ENCODE measurements at regions of chr22 and their contacts with region 1.

Region 1: GRCh38 chr22:36470162-36470993 is 11.1 kb downstream of the TXN2 start:
- DNase-seq: peak; percentile 90
- ATAC-seq: peak; percentile 96
- H3K4me3 Mint-ChIP-seq: no peak overlapping the region
- H3K27ac Mint-ChIP-seq: peak overlapping the region; percentile 77
- H3K4me1 Mint-ChIP-seq: peaks cover 41% of the 10 kb centered on the region
- H3K27me3 Mint-ChIP-seq: no peaks in the 10 kb centered on the region

Region 2: GRCh38 chr22:36311386-36312358 is 158.7 kb before region 1 on chr22:
- CTCF ChIA-PET with region 1: interaction called, 11 read pairs
- POLR2A ChIA-PET with region 1: no interaction called
- DNase-seq: no peak
- ATAC-seq: no peak
- H3K4me3 Mint-ChIP-seq: no peak overlapping the region
- H3K27ac Mint-ChIP-seq: peak overlapping the region; percentile 43
- H3K4me1 Mint-ChIP-seq: peaks cover 5% of the 10 kb centered on the region
- H3K27me3 Mint-ChIP-seq: no peaks in the 10 kb centered on the region

Region 3: DNA sequence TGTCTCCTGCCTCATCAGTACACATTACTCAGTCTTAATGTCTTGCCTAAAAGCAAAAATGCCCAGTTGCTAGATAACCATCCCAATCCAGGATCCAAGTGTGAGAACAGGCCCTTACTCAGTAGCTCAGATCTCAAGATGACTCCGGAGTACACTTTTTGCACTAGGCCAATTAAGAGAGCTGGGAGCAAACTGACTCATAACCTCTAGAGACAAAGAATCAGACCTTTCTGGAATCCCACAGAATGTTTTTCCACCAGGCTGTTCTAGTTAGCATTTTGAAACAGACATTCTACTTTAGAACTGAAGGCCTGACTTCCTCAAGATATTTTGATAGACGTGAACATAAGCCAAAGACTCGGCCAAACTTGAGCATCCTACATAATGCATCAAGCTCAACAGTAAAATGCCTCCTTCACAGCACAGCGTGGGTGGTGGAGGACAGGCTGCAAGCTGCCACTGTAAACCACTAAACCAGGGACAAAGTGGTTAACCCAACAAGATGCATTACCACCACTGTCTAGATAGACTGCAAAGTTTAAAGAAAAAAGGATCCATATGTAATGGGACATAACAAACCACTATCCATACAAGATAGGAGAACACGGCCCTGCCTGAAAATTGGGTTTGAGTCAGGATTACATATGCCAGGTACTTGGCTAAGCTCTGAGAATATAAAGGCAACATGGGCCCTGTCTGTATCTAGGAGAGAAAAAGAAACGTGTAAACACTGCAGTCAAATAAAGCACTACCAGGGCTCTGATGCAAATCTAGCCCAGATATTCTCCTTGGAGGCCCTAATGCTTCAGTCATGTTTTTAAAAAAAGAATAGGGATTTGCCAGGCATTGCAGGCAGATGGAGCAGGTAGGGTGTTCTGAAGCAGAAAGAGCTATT is 131.0 kb before region 1 on chr22:
- CTCF ChIA-PET with region 1: interaction called, 25 read pairs
- POLR2A ChIA-PET with region 1: no interaction called
- DNase-seq: peak; percentile 55
- ATAC-seq: peak; percentile 31
- H3K4me3 Mint-ChIP-seq: peak overlapping the region; percentile 1
- H3K27ac Mint-ChIP-seq: peak overlapping the region; percentile 83
- H3K4me1 Mint-ChIP-seq: peaks cover 98% of the 10 kb centered on the region
- H3K27me3 Mint-ChIP-seq: no peaks in the 10 kb centered on the region

Region 4: GRCh38 chr22:36359181-36359996 is 111.0 kb before region 1 on chr22:
- CTCF ChIA-PET with region 1: interaction called, 12 read pairs
- POLR2A ChIA-PET with region 1: interaction called, 3 read pairs
- DNase-seq: no peak
- ATAC-seq: no peak
- H3K4me3 Mint-ChIP-seq: peak overlapping the region; percentile 13
- H3K27ac Mint-ChIP-seq: peak overlapping the region; percentile 74
- H3K4me1 Mint-ChIP-seq: peaks cover 94% of the 10 kb centered on the region
- H3K27me3 Mint-ChIP-seq: no peaks in the 10 kb centered on the region

Region 5: DNA sequence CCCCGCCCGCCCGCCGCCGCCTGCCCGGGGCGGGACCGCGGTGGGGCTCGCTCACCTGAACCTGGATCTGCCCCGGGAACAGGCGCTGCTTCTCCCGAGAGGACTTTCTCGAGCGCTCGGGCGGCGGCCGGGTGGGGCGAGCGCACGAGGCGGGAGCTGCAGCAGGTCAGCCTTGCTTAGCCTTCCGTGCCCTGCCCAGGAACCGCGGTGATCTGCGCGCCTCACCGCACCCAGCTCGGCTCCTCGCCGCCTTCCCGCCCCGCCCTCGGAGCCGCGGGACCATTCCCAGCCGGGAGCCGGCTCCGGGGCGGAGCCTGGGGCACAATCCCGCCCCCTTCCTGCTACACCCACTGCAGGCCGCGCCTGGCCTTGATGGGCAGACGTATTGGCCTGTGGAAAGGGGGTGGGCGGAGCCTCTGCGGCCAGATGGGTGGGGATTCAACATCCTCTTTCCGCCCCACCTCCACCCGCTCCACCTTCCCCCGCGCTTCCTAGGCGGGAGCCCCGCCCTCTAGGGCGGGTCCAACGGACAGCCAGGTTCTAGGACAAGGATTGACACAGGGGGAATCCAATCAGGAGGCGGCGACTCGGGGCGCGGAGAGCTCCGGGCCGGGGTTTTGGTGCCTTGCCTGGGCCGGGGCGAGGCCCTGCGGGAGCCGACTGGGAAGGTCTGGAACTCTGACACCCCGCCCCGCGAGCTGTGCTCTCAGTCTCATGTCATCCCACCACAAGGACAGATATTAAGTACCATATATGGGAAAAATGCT is 82.4 kb before region 1 on chr22 and contains the start of gene MYH9:
- CTCF ChIA-PET with region 1: interaction called, 17 read pairs
- POLR2A ChIA-PET with region 1: interaction called, 3 read pairs
- DNase-seq: peak; percentile 100
- ATAC-seq: peak; percentile 85
- H3K4me3 Mint-ChIP-seq: peak within 1 kb of the TSS; percentile 88
- H3K27ac Mint-ChIP-seq: peak within 1 kb of the TSS; percentile 92
- H3K4me1 Mint-ChIP-seq: peaks cover 45% of the 10 kb centered on the region
- H3K27me3 Mint-ChIP-seq: no peaks in the 10 kb centered on the region
- total RNA-seq, gene MYH9: 857 to 883 TPM

Region 6: DNA sequence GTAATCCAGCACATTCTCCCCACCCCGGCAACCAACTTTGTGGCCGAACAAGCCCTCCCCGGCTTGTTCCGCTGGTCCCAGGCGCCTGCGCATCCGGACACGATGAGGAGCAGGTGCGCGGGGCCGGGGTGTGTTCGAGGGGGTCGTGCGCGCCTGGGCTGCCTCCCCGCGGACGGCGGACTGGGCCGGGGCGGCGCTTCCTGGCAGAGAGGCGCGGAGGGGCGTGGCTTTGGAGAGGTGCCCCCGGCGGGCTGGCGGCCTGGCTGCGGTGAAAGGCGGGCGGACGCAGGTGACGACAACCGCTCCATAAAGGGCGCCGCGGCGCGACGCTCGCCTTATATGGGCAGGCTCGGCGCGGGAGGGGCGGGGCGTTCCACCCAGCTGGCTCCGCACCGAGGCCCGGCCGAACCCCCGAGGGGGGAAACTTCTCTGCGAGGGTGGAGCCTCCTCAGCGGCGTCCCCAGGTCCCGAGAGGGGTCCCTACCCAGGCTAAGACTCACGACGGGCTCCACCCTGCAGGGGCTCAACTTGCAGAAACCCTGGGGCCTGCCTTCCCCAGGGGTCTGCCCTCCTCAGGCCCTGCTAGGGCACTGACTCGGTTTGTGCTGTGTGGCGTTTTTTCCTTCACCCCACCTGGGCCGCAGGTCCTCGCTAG is 15.3 kb before region 1 on chr22:
- CTCF ChIA-PET with region 1: interaction called, 20 read pairs
- POLR2A ChIA-PET with region 1: interaction called, 5 read pairs
- DNase-seq: peak; percentile 98
- ATAC-seq: peak; percentile 78
- H3K4me3 Mint-ChIP-seq: peak overlapping the region; percentile 70
- H3K27ac Mint-ChIP-seq: peak overlapping the region; percentile 79
- H3K4me1 Mint-ChIP-seq: peaks cover 62% of the 10 kb centered on the region
- H3K27me3 Mint-ChIP-seq: no peaks in the 10 kb centered on the region

Region 7: DNA sequence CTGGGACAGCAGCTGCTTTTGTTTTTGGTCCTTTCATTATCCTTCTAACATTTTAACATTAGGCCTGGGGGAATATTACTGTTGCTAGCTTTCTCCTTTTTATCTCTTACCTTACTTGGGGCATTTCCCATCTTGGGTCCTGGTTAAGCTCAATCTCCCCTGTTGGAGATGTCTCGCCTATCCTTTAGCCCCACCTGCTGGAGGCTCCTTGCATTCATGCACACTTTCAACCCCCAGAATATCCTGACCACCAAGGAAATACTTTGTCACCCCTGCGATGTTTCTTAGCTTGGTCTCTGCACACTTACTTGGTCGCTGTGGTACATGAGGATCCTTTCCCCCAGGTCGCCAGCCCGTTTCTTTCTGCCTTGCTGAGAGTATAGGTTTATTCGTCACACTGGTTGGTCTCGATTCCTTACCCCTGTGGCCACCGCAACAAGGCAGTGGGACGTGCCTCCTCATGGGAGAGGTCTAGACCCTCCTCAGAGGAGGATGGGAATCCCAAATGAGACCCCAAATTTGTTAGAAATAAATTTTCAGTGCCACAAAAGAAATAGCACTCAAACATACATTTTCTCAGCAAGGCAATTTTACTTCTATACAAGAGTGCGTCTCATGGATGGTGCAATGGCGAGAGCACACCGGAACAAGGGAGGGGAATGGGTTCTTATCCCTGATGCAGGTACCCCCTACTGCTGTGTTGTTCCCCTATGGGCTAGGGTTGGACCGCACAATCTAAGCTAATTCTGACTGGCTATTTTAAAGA is 16.4 kb after region 1 on chr22:
- CTCF ChIA-PET with region 1: interaction called, 13 read pairs
- POLR2A ChIA-PET with region 1: interaction called, 5 read pairs
- DNase-seq: peak; percentile 72
- ATAC-seq: no peak
- H3K4me3 Mint-ChIP-seq: no peak overlapping the region
- H3K27ac Mint-ChIP-seq: no peak overlapping the region
- H3K4me1 Mint-ChIP-seq: peaks cover 8% of the 10 kb centered on the region
- H3K27me3 Mint-ChIP-seq: no peaks in the 10 kb centered on the region

Region 8: DNA sequence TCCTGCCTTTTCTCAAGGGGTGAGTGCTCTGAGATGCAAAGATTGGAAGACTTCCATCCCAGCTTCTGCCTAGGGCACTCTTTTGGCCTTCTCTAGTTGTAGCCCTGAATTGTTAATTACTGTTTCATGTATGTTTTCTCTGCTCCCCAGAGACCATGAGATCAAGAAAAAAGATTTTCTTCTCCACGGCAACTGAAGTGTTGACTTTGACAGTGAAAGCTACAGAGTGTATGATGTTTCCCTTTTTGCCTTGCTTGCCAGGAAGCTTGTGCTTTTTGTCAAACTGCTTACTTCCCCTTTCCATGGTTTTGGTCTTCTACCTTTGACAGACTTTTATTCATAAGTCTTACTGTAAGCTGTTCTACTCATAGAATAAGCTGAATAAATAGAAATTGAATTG is 81.9 kb after region 1 on chr22:
- CTCF ChIA-PET with region 1: no interaction called
- POLR2A ChIA-PET with region 1: no interaction called
- DNase-seq: no peak
- ATAC-seq: no peak
- H3K4me3 Mint-ChIP-seq: no peak overlapping the region
- H3K27ac Mint-ChIP-seq: no peak overlapping the region
- H3K4me1 Mint-ChIP-seq: peaks cover 12% of the 10 kb centered on the region
- H3K27me3 Mint-ChIP-seq: peaks cover 17% of the 10 kb centered on the region